ENCODE measurements at regions of chr5 and their contacts with region 1.

Region 1: DNA sequence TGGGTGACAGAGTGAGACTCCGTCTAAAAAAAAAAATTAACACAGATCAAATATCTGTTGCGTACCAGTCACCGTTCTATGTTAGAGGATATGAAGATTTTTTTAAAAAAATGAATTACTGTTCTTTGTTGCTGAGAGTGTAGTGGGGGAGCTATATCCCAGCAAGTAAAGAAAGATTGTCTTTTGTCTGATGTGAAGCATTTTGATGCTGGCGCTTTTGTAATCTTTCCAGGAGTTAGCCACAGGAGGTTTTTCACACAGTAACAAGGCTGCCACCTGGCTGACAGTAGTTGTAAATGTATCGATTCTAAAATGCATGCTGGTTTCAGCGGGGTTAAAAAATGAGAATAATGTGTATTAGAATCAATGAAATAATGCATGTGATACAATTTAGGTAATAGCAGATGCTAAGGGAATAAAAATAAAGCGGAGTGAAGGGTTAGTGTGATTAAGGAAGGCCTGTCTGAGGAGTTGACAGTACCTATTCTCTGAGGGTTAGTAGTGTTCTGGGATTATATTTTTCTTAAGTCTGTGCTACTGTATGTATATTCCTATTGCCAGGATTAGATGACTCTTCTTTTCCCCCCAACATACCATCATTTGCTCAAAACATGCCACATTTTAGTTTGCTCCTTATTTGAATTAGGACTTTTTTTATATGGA is 3.4 kb downstream of the LMNB1 start:
- DNase-seq: no peak
- H3K4me3 ChIP-seq: no peak overlapping the region
- H3K27ac ChIP-seq: no peak overlapping the region
- H3K4me1 ChIP-seq: peaks cover 0 to 34% (median 3%) of the 10 kb centered on the region in 3 donors
- H3K27me3 ChIP-seq: no peaks in the 10 kb centered on the region
- CTCF ChIP-seq: peak; percentile 55 to 75 (median 68)
- POLR2A ChIP-seq: no peak

Region 2: DNA sequence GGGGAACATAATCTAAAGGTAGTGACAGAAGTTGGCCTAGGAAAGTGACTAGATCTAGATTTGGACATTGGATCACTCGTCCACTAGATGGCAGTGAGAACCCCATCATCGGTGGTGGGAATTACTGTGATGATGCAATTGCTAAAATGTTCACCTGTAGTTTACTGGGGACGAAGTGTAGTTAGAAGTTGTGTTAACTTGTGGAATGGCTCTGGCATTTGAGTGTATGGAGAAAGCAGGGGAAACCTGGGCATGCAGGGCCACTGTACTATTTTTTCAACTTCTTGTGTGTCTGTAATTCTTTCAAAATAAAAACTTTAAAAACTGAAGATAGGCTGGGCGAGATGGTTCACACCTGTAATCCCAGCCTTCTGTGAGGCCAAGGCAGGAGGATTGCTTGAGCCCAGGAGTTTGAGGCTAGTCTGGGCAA is 104.1 kb before region 1 on chr5:
- intact Hi-C with region 1: loop called (anchors 5 kb)
- DNase-seq: no peak
- H3K4me3 ChIP-seq: no peak overlapping the region
- H3K27ac ChIP-seq: no peak overlapping the region
- H3K4me1 ChIP-seq: no peaks in the 10 kb centered on the region
- H3K27me3 ChIP-seq: peaks cover 0 to 8% (median 0%) of the 10 kb centered on the region in 4 donors
- CTCF ChIP-seq: peak; percentile 67 to 79 (median 74)
- POLR2A ChIP-seq: no peak

Measured in esophagus squamous epithelium (tissue), 5 donors.